CD8-positive, alpha-beta T cell (primary cell): ENCODE measurements at regions of chrX and their contacts with region 1.

Region 1: DNA sequence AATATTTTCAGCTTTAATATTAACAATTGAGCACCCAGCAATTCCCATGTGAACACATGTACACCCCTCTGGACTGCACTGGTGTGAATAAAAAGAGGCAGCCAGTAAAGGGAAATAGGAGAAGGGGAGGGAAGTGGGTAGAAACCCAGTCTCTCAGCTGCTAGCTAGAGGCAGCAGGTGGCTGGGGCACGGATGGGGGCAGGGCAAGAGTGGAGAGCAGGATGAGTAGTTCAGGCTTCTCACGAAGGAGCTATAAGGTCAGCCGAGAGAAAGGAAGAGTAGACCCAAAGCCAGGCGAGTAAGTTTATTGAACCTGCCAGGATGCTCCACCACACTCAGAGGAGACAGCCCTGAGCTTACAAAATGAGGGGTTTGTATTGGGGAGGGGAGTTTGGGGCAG is 184.8 kb upstream of the MTMR8 start:
- DNase-seq: no peak
- ATAC-seq: no peak
- H3K4me3 ChIP-seq: no peak overlapping the region
- H3K4me3 Mint-ChIP-seq: no peak overlapping the region
- H3K27ac ChIP-seq: no peak overlapping the region
- H3K27ac Mint-ChIP-seq: no peak overlapping the region
- H3K4me1 ChIP-seq: no peaks in the 10 kb centered on the region
- H3K4me1 Mint-ChIP-seq: peaks cover 4% of the 10 kb centered on the region
- H3K27me3 ChIP-seq: no peaks in the 10 kb centered on the region
- H3K27me3 Mint-ChIP-seq: no peaks in the 10 kb centered on the region
- CTCF ChIP-seq: no peak

Region 2: GRCh38 chrX:63513825-63514568 is 1066.0 kb before region 1 on chrX:
- CTCF ChIA-PET with region 1: no interaction called
- POLR2A ChIA-PET with region 1: no interaction called
- intact Hi-C with region 1: no loop called
- DNase-seq: no peak
- ATAC-seq: no peak
- H3K4me3 ChIP-seq: no peak overlapping the region
- H3K4me3 Mint-ChIP-seq: no peak overlapping the region
- H3K27ac ChIP-seq: no peak overlapping the region
- H3K27ac Mint-ChIP-seq: no peak overlapping the region
- H3K4me1 ChIP-seq: no peaks in the 10 kb centered on the region
- H3K4me1 Mint-ChIP-seq: peaks cover 15% of the 10 kb centered on the region
- H3K27me3 ChIP-seq: no peaks in the 10 kb centered on the region
- H3K27me3 Mint-ChIP-seq: no peaks in the 10 kb centered on the region
- CTCF ChIP-seq: no peak

Region 3: GRCh38 chrX:64437665-64438064 is 142.4 kb before region 1 on chrX:
- CTCF ChIA-PET with region 1: no interaction called
- POLR2A ChIA-PET with region 1: no interaction called
- intact Hi-C with region 1: no loop called
- DNase-seq: no peak
- ATAC-seq: no peak
- H3K4me3 ChIP-seq: no peak overlapping the region
- H3K4me3 Mint-ChIP-seq: no peak overlapping the region
- H3K27ac ChIP-seq: no peak overlapping the region
- H3K27ac Mint-ChIP-seq: no peak overlapping the region
- H3K4me1 ChIP-seq: no peaks in the 10 kb centered on the region
- H3K4me1 Mint-ChIP-seq: no peaks in the 10 kb centered on the region
- H3K27me3 ChIP-seq: no peaks in the 10 kb centered on the region
- H3K27me3 Mint-ChIP-seq: no peaks in the 10 kb centered on the region
- CTCF ChIP-seq: no peak

Region 4: DNA sequence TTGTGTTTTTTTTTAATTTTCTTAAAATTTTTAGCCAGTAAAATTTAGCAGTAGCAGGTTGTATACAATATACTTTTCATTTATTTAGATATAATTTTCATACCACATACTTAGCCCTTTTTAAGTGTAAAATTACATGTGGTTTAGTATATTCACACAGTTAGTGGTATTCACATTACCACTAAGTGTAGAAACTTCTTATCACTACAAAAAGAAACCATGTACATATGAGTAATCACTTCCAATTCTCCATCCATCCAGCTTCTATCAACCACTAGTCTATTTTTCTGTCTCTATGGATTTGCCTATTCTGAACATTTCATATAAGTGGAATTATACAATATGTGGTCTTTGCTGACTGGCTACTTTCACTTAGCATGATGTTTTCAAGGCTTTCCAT is 287.2 kb after region 1 on chrX:
- CTCF ChIA-PET with region 1: no interaction called
- POLR2A ChIA-PET with region 1: no interaction called
- intact Hi-C with region 1: loop called in 1 of 2 experiments (anchors 10 kb)
- DNase-seq: no peak
- ATAC-seq: no peak
- H3K4me3 ChIP-seq: no peak overlapping the region
- H3K4me3 Mint-ChIP-seq: no peak overlapping the region
- H3K27ac ChIP-seq: no peak overlapping the region
- H3K27ac Mint-ChIP-seq: no peak overlapping the region
- H3K4me1 ChIP-seq: no peaks in the 10 kb centered on the region
- H3K4me1 Mint-ChIP-seq: peaks cover 2% of the 10 kb centered on the region
- H3K27me3 ChIP-seq: no peaks in the 10 kb centered on the region
- H3K27me3 Mint-ChIP-seq: no peaks in the 10 kb centered on the region
- CTCF ChIP-seq: no peak